A549 (cell line): ENCODE measurements at regions of chr15 and their contacts with region 1.

Region 1: DNA sequence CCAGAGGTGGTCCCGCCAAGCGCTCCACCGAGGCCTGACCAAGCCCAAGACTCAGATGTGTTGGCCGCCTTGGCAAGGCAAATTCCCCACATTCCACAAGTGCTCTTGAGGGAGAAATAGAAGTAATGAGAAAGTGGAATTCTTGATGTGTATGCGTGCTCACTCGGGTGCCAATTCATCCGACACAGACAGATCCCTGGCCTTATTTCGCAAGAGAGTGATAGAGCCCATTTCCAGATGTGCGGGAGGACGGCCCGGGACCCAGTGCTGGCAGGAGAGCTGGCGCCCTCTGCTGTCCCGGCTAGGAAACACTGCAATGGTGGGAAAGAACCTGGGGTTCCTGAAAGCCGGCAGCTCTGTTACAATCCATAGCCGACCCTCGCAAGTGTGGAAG is 76.0 kb downstream of the HMG20A start:
- DNase-seq: peak; percentile 75 to 89
- ATAC-seq: peak; percentile 84 to 97
- H3K4me3 ChIP-seq: no peak overlapping the region
- H3K27ac ChIP-seq: peak overlapping the region in 1 of 2 experiments; percentile 41; a peak in 3 of 6 replicates
- H3K4me1 ChIP-seq: peaks cover 11% of the 10 kb centered on the region; the same call in 2 of the 3 replicates
- CTCF ChIP-seq: peak; percentile 97
- EP300 ChIP-seq: no peak
- POLR2A ChIP-seq: no peak
- RAD21 ChIP-seq: peak; percentile 95 to 97

Region 2: DNA sequence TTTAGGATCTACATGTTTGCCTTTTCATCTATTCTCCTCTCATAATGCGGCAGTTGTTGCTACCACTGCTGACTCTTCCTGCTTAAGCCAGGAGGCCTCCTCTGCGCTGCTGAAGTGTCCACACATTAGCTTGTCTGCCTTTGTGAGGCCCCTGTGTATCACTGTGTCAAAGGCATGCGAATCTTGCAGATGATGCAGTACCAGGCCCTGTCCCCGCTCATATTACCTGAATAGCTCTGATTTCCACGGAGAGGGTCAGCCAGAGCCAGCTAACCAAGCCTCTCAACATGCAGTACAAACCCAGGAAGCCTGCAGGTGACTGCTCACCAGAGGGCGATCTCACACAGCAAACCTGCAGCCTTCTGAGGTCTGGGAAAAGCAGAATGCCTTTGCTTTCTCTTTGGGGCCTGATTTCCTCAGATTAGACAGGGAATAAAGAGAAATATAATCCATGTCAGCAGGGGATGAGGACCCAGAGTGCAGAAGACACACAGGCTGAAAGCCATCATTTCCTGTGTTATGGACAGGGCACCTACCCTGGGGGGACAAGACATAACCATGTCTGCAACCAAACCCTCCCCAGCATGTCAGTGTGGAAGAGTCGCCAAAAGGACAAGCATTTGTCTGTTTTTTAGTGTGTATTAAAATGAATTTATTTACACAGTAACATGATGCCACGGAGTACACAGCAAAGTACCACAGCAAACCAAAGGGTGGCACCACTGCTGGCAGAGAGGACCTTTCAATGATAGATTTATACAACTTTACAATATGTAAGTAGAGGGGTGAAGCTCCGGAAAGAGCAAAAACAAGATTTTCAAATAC is 389.0 kb before region 1 on chr15:
- CTCF ChIA-PET with region 1: interaction called, 88 read pairs
- POLR2A ChIA-PET with region 1: no interaction called
- DNase-seq: peak; percentile 53 to 60
- ATAC-seq: peak; percentile 89 to 95
- H3K4me3 ChIP-seq: no peak overlapping the region
- H3K27ac ChIP-seq: no peak overlapping the region
- H3K4me1 ChIP-seq: no peaks in the 10 kb centered on the region
- CTCF ChIP-seq: peak; percentile 72
- EP300 ChIP-seq: no peak
- POLR2A ChIP-seq: no peak
- RAD21 ChIP-seq: peak; percentile 80 to 89

Region 3: GRCh38 chr15:77118882-77119321 is 377.8 kb before region 1 on chr15:
- CTCF ChIA-PET with region 1: interaction called, 192 read pairs
- POLR2A ChIA-PET with region 1: no interaction called
- DNase-seq: peak; percentile 64 to 74
- ATAC-seq: peak; percentile 83 to 93
- H3K4me3 ChIP-seq: no peak overlapping the region
- H3K27ac ChIP-seq: no peak overlapping the region
- H3K4me1 ChIP-seq: no peaks in the 10 kb centered on the region
- CTCF ChIP-seq: peak; percentile 96
- EP300 ChIP-seq: no peak
- POLR2A ChIP-seq: no peak
- RAD21 ChIP-seq: peak; percentile 93

Region 4: DNA sequence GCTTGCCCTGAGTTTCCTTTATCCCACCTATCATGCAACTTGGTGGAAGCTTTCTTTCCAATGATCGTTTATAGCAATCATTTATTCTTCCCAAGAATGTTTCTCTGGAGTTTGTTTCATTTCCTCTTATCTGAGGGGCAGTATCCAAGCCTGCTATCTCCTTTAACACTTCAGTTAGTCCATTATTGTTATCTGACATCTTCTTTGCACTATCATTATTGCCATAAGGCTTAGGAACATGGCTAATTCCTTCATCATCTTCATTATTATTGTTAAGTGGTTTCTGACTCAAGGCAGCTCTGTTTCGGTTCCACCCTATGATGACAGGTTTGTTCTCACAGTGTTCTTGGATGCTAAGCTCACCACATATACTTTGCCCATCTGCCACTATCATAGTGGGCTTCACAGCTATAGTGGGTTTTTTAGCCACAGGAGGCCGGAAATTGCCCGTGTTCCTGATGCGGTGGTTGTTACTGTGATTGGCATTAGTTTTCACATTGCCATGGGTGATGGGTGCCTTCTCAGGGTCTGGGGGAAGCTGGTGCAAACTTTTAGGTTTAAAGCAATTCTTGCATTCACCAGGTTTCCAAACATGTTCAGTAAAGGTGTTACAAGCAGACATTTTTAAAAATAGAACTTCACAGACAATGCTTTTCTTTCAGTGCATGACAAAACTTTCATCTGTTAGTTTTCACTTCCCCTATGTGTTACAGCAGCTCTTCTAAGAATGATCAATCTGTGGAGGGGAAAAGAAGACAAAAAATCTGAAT is 315.2 kb before region 1 on chr15:
- CTCF ChIA-PET with region 1: interaction called, 41 read pairs
- POLR2A ChIA-PET with region 1: interaction called, 3 read pairs
- DNase-seq: no peak
- ATAC-seq: no peak
- H3K4me3 ChIP-seq: no peak overlapping the region
- H3K27ac ChIP-seq: no peak overlapping the region
- H3K4me1 ChIP-seq: peaks cover 5% of the 10 kb centered on the region; the same call in 1 of the 3 replicates
- CTCF ChIP-seq: no peak
- EP300 ChIP-seq: no peak
- POLR2A ChIP-seq: no peak
- RAD21 ChIP-seq: no peak

Region 5: DNA sequence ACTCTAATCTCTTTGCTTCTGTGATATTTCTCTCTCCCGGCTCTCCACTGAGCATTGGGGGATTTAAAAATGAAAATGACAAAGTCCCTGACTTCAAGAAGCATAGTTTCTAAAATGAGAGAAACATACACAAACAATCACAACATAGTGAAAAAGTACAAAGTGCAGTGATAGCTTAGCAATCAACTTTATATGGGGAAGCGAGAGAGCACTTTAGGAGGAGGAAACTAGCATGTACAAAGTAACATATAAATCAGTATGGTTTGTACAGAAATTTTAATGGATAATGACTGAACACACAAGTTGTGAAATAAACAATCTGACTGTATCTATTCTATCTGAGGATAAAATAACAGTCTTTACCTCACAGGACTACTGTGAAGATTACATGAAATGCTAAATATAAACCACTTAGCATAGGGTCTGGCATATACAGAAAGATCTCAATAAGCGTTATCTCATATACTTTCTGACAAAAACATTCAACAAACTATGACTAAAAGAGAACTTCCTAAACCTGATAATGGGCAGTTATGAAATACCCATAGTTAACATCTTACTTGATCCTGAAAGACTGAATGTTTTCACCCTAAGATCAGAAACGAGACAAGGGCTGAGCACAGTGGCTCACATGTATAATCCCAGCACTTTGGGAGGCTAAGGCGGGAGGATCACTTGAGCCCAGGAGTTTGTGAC is 138.0 kb before region 1 on chr15:
- CTCF ChIA-PET with region 1: no interaction called
- POLR2A ChIA-PET with region 1: no interaction called
- DNase-seq: no peak
- ATAC-seq: no peak
- H3K4me3 ChIP-seq: no peak overlapping the region
- H3K27ac ChIP-seq: no peak overlapping the region
- H3K4me1 ChIP-seq: peaks cover 10% of the 10 kb centered on the region
- CTCF ChIP-seq: no peak
- EP300 ChIP-seq: no peak
- POLR2A ChIP-seq: no peak
- RAD21 ChIP-seq: no peak

Region 6: GRCh38 chr15:77476995-77477394 is 19.7 kb before region 1 on chr15:
- CTCF ChIA-PET with region 1: interaction called, 26 read pairs
- POLR2A ChIA-PET with region 1: no interaction called
- DNase-seq: no peak
- ATAC-seq: no peak
- H3K4me3 ChIP-seq: no peak overlapping the region
- H3K27ac ChIP-seq: no peak overlapping the region
- H3K4me1 ChIP-seq: peaks cover 3% of the 10 kb centered on the region; the same call in 2 of the 3 replicates
- CTCF ChIP-seq: no peak
- EP300 ChIP-seq: no peak
- POLR2A ChIP-seq: no peak
- RAD21 ChIP-seq: no peak

Region 7: DNA sequence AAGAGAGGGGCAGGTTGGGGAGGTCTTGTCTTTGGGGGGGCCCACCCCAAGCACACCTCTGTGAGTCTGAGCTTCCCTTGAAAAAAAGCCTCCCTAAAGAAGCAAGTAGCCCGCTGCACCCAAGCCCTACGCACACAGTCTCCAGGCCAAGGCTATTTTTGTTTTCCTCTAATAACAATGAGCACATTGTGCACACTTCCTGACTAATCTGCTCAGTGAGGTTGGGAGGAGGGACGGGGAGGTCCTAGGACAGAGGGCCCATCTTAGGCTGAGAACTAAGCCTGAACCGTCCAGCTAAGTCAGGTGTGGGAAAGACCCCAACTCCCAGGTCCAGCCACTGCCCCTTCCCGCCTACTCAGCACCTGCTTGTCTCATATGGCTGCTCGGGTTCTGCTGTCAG is 11.2 kb after region 1 on chr15:
- CTCF ChIA-PET with region 1: interaction called, 57 read pairs
- POLR2A ChIA-PET with region 1: no interaction called
- DNase-seq: no peak
- ATAC-seq: peak in 1 of 2 experiments; percentile 34; a peak in 1 of 6 replicates
- H3K4me3 ChIP-seq: no peak overlapping the region
- H3K27ac ChIP-seq: no peak overlapping the region
- H3K4me1 ChIP-seq: no peaks in the 10 kb centered on the region
- CTCF ChIP-seq: no peak
- EP300 ChIP-seq: no peak
- POLR2A ChIP-seq: no peak
- RAD21 ChIP-seq: no peak